HepG2 (cell line): ENCODE measurements at regions of chr5 and their contacts with region 1.

Region 1: GRCh38 chr5:60699530-60700382 is at the start of gene DEPDC1B:
- DNase-seq: peak; percentile 83
- ATAC-seq: peak; percentile 96
- H3K4me3 ChIP-seq: peak within 1 kb of the TSS; percentile 83 to 90 (median 85)
- H3K27ac ChIP-seq: peak within 1 kb of the TSS; percentile 96
- H3K4me1 ChIP-seq: peaks cover 43% of the 10 kb centered on the region
- H3K27me3 ChIP-seq: no peaks in the 10 kb centered on the region; a peak in 1 of 5 replicates
- CTCF ChIP-seq: peak; percentile 78
- EP300 ChIP-seq: no peak
- POLR2A ChIP-seq: peak; percentile 80 to 89
- RAD21 ChIP-seq: no peak
- total RNA-seq, gene DEPDC1B: 51.3 and 78.3 TPM in 2 replicates

Region 2: DNA sequence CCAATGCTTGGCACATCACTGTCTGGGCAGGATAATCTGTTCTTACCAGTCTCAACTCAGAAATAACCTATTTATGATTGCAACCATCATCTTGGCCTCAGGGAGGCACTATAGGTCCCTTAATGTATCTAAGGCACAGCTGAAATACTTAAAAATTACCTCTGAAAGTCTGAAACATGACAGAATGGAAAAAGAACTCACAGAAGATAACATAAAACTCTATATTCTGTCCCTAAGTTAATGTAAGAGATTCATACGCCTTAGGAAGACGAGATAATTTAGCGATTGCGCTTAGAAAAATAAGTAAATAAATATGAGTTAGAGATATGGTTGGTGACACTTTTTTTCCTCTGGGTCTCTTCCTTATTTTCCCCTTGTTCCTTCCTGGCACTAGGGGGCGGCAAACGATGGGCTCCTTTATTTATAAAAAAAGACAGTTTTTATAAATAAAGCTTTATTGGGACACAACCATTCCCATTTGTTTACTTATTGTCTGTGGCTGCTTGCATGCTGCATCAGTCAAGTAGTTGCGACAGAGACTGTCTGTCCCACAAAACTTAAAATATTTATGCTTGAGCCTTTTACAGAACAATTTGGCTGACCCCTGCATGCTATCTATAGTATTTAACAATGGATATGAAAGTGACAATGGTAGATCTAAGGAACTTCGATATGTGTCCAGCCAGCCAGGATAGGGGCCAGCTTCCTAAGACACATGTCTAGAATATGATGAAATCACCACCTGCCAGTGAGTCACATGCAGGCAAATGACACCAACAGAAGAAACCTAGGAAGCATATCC is 885.8 kb before region 1 on chr5:
- CTCF ChIA-PET with region 1: no interaction called
- POLR2A ChIA-PET with region 1: no interaction called
- in situ Hi-C with region 1: no loop called
- intact Hi-C with region 1: no loop called
- DNase-seq: peak; percentile 30
- ATAC-seq: peak; percentile 44; the same call in 1 of the 3 replicates
- H3K4me3 ChIP-seq: no peak overlapping the region; a peak in 1 of 6 replicates
- H3K27ac ChIP-seq: no peak overlapping the region
- H3K4me1 ChIP-seq: 0 out of 2 replicates have a peak, but pooled peaks cover 5% of the 10 kb centered on the region
- H3K27me3 ChIP-seq: no peaks in the 10 kb centered on the region
- CTCF ChIP-seq: peak; percentile 54
- EP300 ChIP-seq: no peak
- POLR2A ChIP-seq: no peak
- RAD21 ChIP-seq: no peak

Region 3: DNA sequence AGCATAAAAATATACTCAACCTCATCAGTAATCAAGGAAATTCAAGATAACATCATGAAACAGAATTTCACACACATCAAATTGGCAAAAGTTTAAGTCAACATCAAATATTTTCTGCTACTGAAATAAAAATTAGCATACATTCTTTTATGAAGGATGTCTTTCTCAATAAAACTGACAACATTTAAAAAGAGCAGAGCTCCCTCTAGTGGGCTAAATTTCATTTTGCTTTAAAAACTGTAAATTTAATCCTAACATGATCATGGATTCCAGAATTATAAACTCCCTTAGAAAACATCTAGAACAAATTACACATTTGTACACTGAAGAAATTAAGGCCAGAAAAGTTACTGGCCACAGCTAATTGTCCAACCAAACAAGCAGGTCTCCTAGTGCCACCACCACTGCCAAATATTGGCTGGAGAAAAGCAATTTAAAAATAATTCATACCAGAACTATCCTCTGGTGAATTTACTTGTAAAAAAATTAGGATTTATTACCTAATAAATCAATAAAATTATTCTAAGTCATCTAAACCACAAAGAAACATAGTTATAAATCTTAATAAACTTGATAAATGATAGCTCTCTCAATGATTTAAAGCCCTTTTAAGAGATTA is 31.0 kb before region 1 on chr5:
- CTCF ChIA-PET with region 1: no interaction called
- POLR2A ChIA-PET with region 1: interaction called, 11 read pairs
- in situ Hi-C with region 1: no loop called
- intact Hi-C with region 1: loop called (anchors 1 kb)
- DNase-seq: peak; percentile 33
- ATAC-seq: no peak
- H3K4me3 ChIP-seq: no peak overlapping the region; a peak in 2 of 6 replicates
- H3K27ac ChIP-seq: peak overlapping the region; percentile 50
- H3K4me1 ChIP-seq: peaks cover 56% of the 10 kb centered on the region
- H3K27me3 ChIP-seq: no peaks in the 10 kb centered on the region
- CTCF ChIP-seq: peak; percentile 43; the same call in 1 of the 2 replicates
- EP300 ChIP-seq: no peak
- POLR2A ChIP-seq: no peak
- RAD21 ChIP-seq: no peak

Region 4: DNA sequence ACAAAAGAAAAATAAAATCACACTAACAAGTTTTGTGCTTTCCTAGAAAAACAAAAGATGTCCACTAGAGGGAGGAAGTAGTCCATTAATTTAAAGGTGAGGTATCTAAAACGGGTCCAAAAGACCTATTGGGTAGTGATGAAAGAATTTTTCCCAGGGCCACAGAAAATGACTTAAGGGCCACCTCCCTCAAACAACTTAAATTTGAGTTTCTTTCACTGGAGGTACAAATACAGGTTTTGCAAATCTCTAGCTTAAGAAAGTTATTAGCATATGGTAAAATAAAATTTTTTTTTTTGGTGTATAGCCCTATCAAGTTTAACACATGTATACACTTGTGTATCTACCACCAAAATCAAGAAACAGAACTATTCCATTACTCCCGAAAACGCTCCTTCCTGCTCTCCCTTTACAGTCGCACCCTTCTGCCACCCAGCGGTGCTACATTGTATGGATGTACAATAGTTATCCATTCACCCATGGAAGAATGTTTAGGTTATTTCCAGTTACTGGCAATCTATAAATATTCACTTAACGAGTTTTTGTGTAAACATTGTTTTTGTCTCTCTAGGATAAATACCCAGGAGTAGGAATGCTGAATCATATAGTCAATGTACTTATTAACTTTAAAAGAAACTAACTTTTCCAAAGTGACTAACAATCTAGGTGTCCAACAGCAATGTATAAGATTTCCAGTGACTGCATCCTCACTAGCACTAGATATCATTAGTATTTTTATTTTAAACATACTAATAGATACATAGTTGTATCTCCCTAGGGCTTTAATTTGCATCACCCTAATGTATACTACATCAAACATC is 21.7 kb before region 1 on chr5:
- CTCF ChIA-PET with region 1: interaction called, 12 read pairs
- POLR2A ChIA-PET with region 1: interaction called, 11 read pairs
- in situ Hi-C with region 1: no loop called
- intact Hi-C with region 1: loop called (anchors 1 kb)
- DNase-seq: peak; percentile 64
- ATAC-seq: peak; percentile 81
- H3K4me3 ChIP-seq: peak overlapping the region in 1 of 3 experiments; percentile 17; a peak in 1 of 6 replicates
- H3K27ac ChIP-seq: peak overlapping the region; percentile 57
- H3K4me1 ChIP-seq: peaks cover 65% of the 10 kb centered on the region
- H3K27me3 ChIP-seq: no peaks in the 10 kb centered on the region
- CTCF ChIP-seq: peak; percentile 46
- EP300 ChIP-seq: peak in 1 of 2 experiments; percentile 41; a peak in 1 of 4 replicates
- POLR2A ChIP-seq: no peak
- RAD21 ChIP-seq: 0 out of 2 replicates have a peak, but pooled peaks have one; percentile 17

Region 5: DNA sequence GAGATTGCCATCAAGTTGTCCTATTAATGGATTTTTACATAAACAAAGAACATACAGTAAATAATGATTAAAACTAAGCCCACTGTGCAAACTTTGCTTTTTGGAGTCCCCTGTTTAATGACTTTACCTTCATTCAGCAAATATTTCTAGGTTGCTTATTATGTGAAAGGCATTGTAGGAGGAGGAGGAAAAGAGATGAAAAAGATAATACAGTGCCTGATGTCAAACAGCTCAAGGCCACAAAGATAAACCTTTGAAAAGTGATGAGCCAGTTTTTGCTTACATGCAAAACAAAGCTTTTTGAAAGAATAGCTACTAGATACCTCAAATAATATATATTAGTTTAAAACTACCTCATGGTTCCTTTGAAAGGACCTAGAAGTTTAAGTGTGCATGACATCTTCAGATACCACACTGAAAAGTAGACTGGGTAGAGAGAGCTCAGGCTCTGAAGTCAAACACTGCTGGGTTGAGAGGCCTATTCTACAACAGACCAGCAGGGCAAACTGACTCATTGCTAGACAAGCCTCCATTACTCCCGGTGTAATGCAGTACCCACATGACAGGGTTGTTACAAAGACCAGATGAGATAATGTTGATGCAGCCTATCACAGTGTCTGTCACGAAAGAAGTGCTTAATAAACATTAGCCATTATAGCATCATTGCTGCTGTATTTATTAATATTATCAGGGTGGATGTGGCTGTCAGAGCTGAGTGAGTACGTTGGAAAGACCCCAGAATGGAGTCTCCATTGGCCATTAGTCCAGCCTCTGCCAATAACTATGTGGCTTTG is 11.6 kb before region 1 on chr5:
- CTCF ChIA-PET with region 1: interaction called, 3 read pairs
- POLR2A ChIA-PET with region 1: interaction called, 41 read pairs
- in situ Hi-C with region 1: no loop called
- intact Hi-C with region 1: loop called (anchors 1 kb)
- DNase-seq: peak; percentile 85
- ATAC-seq: peak; percentile 100
- H3K4me3 ChIP-seq: peak overlapping the region in 1 of 3 experiments; percentile 7; a peak in 1 of 6 replicates
- H3K27ac ChIP-seq: peak overlapping the region; percentile 53
- H3K4me1 ChIP-seq: peaks cover 32% of the 10 kb centered on the region
- H3K27me3 ChIP-seq: no peaks in the 10 kb centered on the region
- CTCF ChIP-seq: peak; percentile 35; the same call in 1 of the 2 replicates
- EP300 ChIP-seq: peak in 1 of 2 experiments; percentile 19; a peak in 1 of 4 replicates
- POLR2A ChIP-seq: no peak
- RAD21 ChIP-seq: no peak

Region 6: GRCh38 chr5:60710373-60710772 is 10.6 kb after region 1 on chr5:
- CTCF ChIA-PET with region 1: no interaction called
- POLR2A ChIA-PET with region 1: interaction called, 10 read pairs
- in situ Hi-C with region 1: no loop called
- intact Hi-C with region 1: no loop called
- DNase-seq: peak; percentile 30
- ATAC-seq: peak; percentile 77
- H3K4me3 ChIP-seq: no peak overlapping the region
- H3K27ac ChIP-seq: no peak overlapping the region
- H3K4me1 ChIP-seq: peaks cover 5% of the 10 kb centered on the region; the same call in 1 of the 2 replicates
- H3K27me3 ChIP-seq: peaks cover 0 to 1% of the 10 kb centered on the region in 2 experiments; a peak in 1 of 5 replicates
- CTCF ChIP-seq: peak; percentile 51
- EP300 ChIP-seq: no peak
- POLR2A ChIP-seq: no peak
- RAD21 ChIP-seq: no peak

Region 7: DNA sequence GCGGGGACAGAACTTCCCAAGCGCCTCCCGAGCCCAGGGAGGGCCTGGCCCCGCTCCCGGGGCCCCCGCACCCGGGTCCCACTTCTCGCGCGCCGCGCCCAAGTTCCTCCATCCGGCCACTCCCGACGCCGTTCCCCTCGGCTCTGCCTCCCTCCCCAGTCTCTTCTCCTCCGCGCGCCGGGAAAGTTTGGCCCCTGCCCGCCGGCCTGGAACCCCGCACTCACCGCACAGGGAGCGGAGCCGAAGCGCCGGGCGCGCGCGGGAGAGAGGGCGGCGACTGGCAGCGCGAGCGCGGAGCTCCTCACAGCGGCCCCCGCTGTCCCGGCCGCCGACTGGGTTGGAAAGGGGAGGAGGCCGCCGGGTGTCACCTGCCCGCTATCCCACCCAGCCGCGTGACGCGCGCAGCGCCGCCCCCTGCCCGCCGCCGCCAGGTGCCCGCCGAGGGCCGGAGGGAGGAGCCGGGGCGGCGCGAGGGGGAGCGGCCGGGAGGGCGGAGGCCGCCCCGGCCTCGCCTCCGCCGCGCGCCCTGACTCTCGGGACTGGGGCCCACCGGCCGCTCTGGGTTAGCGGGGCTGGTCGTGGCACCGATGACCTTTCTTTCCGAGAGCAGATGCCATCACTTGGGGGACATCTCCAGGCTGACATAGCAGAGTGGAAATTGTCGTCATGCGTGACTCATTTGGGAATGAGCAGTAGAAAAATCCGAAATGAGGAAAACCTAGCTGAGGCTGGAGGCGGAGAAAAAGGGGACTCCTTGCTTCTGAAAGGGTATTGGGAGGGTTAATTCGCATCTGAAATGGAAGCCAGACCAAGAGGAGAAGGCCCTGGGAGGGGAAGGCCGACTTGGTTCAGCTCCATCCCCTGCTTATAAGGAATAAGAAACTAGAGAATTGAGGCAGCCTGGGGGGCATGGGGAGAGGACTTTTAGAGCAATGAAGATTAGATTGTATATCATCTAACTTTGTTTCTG is 144.5 kb after region 1 on chr5 and contains the start of gene ELOVL7:
- CTCF ChIA-PET with region 1: interaction called, 3 read pairs
- POLR2A ChIA-PET with region 1: interaction called, 8 read pairs
- in situ Hi-C with region 1: no loop called
- intact Hi-C with region 1: loop called (anchors 5 kb)
- DNase-seq: peak; percentile 59
- ATAC-seq: peak; percentile 97
- H3K4me3 ChIP-seq: peak within 1 kb of the TSS; percentile 85 to 89 (median 87)
- H3K27ac ChIP-seq: no peak within 1 kb of the TSS
- H3K4me1 ChIP-seq: peaks cover 8% of the 10 kb centered on the region
- H3K27me3 ChIP-seq: peaks cover 2 to 13% of the 10 kb centered on the region in 2 experiments
- CTCF ChIP-seq: peak; percentile 69
- EP300 ChIP-seq: no peak
- POLR2A ChIP-seq: peak; percentile 42 to 46; a peak in 2 of 4 replicates
- RAD21 ChIP-seq: peak; percentile 79
- total RNA-seq, gene ELOVL7: 5.1 and 7.3 TPM in 2 replicates

Region 8: GRCh38 chr5:60883229-60883628 is 183.5 kb after region 1 on chr5:
- CTCF ChIA-PET with region 1: no interaction called
- POLR2A ChIA-PET with region 1: no interaction called
- in situ Hi-C with region 1: no loop called
- intact Hi-C with region 1: loop called (anchors 5 kb)
- DNase-seq: peak; percentile 29
- ATAC-seq: peak; percentile 64
- H3K4me3 ChIP-seq: no peak overlapping the region
- H3K27ac ChIP-seq: no peak overlapping the region
- H3K4me1 ChIP-seq: peaks cover 17% of the 10 kb centered on the region
- H3K27me3 ChIP-seq: no peaks in the 10 kb centered on the region
- CTCF ChIP-seq: peak; percentile 69
- EP300 ChIP-seq: no peak
- POLR2A ChIP-seq: no peak
- RAD21 ChIP-seq: no peak; the same call in 1 of the 2 replicates